PC-3 (cell line): ENCODE measurements at regions of chrX and their contacts with region 1.

Region 1: GRCh38 chrX:4830568-4831557 is 1117.4 kb upstream of the PRKX start:
- DNase-seq: peak; percentile 91
- ATAC-seq: peak; percentile 98
- H3K4me3 ChIP-seq: no peak overlapping the region; the same call in 1 of the 2 replicates
- H3K27ac ChIP-seq: peak overlapping the region; percentile 68
- H3K4me1 ChIP-seq: peaks cover 23% of the 10 kb centered on the region
- H3K27me3 ChIP-seq: no peaks in the 10 kb centered on the region
- CTCF ChIP-seq: no peak

Region 2: GRCh38 chrX:4560192-4560591 is 270.7 kb before region 1 on chrX:
- CTCF ChIA-PET with region 1: no interaction called
- POLR2A ChIA-PET with region 1: no interaction called
- intact Hi-C with region 1: loop called (anchors 10 kb)
- DNase-seq: peak; percentile 65
- ATAC-seq: peak; percentile 97
- H3K4me3 ChIP-seq: no peak overlapping the region
- H3K27ac ChIP-seq: peak overlapping the region; percentile 9; the same call in 1 of the 2 replicates
- H3K4me1 ChIP-seq: peaks cover 9% of the 10 kb centered on the region
- H3K27me3 ChIP-seq: no peaks in the 10 kb centered on the region
- CTCF ChIP-seq: no peak